Mammary epithelial cell (primary cell): ENCODE measurements at regions of chr14 and their contacts with region 1.

Region 1: GRCh38 chr14:96741151-96741977 is 55.8 kb upstream of the VRK1 start:
- DNase-seq: peak; percentile 37
- H3K4me3 ChIP-seq: peak overlapping the region; percentile 49 to 56 (median 50)
- H3K27ac ChIP-seq: no peak overlapping the region
- H3K4me1 ChIP-seq: no peaks in the 10 kb centered on the region
- H3K27me3 ChIP-seq: peaks cover 10% of the 10 kb centered on the region
- CTCF ChIP-seq: peak; percentile 50 to 84

Region 2: DNA sequence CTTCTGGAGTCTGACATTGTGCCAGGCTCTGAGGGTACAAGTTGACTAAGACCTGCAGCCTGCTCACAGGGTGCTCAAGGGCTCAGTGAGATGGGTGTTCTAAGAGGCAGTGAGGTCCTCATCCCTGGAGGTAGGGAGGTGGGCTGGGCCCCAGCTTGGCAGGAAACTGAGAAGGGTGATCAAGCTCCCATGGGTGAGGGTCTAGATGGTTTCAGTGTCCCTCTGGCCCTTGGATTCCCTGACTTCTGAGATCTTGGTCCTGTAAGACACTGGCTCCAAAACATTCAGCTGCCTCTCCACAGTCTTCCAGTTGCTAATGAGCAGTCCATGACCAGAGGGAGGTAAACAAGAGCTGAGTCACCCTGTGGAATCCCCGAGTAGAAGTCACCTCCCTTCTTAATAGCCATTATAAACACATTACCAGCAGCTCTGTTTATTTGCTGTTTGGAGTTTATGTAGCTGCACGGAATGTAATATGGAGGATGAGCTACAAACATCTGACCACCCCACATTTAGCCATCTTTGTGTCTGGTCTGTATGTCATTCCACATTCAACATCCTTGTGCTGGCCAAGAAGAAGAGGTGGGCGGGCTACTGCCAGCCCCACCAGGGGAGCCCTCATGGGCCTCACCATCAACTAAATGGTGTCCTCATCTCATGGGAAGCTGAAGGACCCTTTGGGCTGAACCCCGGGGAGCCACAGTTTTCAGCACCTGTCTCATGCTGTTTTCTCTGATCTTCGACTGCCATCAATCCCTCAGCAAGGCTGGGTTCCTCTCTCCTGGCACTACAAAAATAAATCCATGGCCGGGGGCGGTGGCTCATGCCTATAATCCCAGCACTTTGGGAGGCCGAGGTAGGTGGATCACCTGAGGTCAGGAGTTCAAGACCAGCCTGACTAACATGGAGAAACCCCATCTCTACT is 573.9 kb before region 1 on chr14:
- CTCF ChIA-PET with region 1: no interaction called
- dilution Hi-C with region 1: no loop called
- in situ Hi-C with region 1: no loop called
- intact Hi-C with region 1: no loop called
- DNase-seq: peak; percentile 75
- H3K4me3 ChIP-seq: no peak overlapping the region
- H3K27ac ChIP-seq: no peak overlapping the region
- H3K4me1 ChIP-seq: peaks cover 6% of the 10 kb centered on the region
- H3K27me3 ChIP-seq: no peaks in the 10 kb centered on the region
- CTCF ChIP-seq: no peak

Region 3: DNA sequence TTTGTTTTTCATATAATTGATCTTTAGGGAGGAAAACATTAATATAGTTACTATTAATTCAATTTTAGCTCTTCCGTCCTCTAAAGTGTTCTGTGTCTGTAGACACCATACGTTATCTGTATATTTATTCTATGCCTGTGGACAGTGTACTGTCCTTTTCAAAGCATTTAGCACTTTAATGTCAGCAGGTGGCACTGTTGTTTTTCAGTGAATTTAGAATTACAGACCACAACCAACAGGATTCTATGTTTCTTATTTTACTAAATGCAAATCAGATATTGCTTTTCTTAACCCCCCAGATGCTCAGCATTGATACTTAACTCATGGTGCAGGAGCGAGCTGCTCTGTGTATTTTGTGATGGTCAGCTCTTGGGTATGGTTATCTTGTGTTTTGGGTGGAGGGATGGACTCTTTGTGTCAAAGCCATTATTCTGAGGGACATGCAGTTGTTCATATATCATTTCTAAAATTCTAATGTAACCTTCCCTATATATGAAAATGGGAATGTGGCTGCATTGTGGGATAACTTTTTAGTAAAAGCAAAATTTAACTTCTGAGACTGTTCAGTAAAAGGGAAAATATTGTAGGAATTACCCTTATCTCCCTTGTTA is 174.0 kb before region 1 on chr14:
- CTCF ChIA-PET with region 1: no interaction called
- dilution Hi-C with region 1: no loop called
- in situ Hi-C with region 1: no loop called
- intact Hi-C with region 1: loop called (anchors 1 kb)
- DNase-seq: no peak
- H3K4me3 ChIP-seq: no peak overlapping the region
- H3K27ac ChIP-seq: no peak overlapping the region
- H3K4me1 ChIP-seq: no peaks in the 10 kb centered on the region
- H3K27me3 ChIP-seq: no peaks in the 10 kb centered on the region
- CTCF ChIP-seq: peak; percentile 47 to 50

Region 4: GRCh38 chr14:96584199-96584906 is 157.0 kb before region 1 on chr14:
- CTCF ChIA-PET with region 1: no interaction called
- dilution Hi-C with region 1: no loop called
- in situ Hi-C with region 1: loop called (anchors 10 kb)
- intact Hi-C with region 1: loop called (anchors 1 kb)
- DNase-seq: peak; percentile 29
- H3K4me3 ChIP-seq: no peak overlapping the region
- H3K27ac ChIP-seq: no peak overlapping the region
- H3K4me1 ChIP-seq: no peaks in the 10 kb centered on the region
- H3K27me3 ChIP-seq: peaks cover 4% of the 10 kb centered on the region
- CTCF ChIP-seq: peak; percentile 30 to 57